Heart left ventricle (tissue), 16 donors: ENCODE measurements at regions of chr1 and their contacts with region 1.

Region 1: DNA sequence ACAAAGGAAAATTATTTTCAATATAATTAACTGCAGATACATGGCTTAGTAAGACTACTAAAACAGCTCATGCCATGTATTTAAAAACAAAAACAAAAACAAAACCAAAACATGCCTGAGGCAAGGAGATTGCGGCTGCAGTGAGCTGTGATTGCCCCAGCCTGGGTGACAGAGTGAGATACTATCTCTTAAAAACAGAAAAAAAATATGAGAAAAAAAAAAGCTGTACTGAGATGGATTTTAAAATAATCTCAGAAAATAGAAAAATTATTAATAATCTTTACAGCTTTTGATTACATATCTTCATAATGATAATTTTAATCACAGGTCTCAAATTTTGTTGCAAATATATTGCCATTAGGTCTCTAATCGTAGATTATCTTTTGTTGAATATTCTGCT is 24.0 kb upstream of the LIN9 start:
- DNase-seq: no peak
- ATAC-seq: no peak
- H3K4me3 ChIP-seq: no peak overlapping the region
- H3K27ac ChIP-seq: no peak overlapping the region
- H3K4me1 ChIP-seq: no peaks in the 10 kb centered on the region
- H3K27me3 ChIP-seq: peaks cover 0 to 5% (median 0%) of the 10 kb centered on the region in 9 donors
- CTCF ChIP-seq: no peak
- POLR2A ChIP-seq: no peak

Region 2: DNA sequence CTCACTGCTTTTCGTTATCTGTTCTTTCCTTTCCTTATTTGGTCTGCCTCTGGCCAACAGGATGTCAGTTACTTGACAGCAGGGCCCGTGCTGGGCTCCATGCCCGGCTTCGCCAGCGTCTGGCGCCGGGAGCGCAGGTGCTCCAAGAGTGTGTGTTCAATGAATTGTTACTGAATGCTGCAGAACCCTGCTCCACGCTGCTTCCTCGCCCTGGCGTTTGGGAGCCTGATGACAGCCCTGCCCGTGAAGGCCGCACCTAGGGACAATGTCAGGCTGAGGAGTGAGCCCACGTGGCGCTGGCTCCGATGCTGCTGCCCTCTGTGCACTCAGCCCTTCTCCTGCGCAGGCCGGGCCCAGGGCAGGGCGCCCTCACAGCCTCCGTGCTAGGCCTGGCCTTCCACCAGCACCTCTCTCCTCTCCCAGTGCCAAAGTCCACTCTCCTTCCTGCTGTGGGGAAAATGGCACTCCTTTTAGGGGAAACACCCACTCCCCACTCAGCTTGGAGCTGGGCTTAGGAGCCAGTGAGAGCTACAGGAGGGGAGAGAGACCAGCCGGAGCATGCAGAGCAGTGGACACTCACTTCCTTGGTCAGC is 197.8 kb before region 1 on chr1:
- intact Hi-C with region 1: loop called in 1 of 10 experiments (anchors 10 kb)
- DNase-seq: peak in 3 of 5 donors; percentile 33 to 50 (median 49)
- ATAC-seq: peak; percentile 25 to 81 (median 74)
- H3K4me3 ChIP-seq: peak overlapping the region in 1 of 12 donors; percentile 2
- H3K27ac ChIP-seq: no peak overlapping the region
- H3K4me1 ChIP-seq: peaks cover 0 to 17% (median 6%) of the 10 kb centered on the region in 12 donors
- H3K27me3 ChIP-seq: no peaks in the 10 kb centered on the region
- CTCF ChIP-seq: no peak
- POLR2A ChIP-seq: no peak